ENCODE measurements at regions of chr17 and their contacts with region 1.

Region 1: DNA sequence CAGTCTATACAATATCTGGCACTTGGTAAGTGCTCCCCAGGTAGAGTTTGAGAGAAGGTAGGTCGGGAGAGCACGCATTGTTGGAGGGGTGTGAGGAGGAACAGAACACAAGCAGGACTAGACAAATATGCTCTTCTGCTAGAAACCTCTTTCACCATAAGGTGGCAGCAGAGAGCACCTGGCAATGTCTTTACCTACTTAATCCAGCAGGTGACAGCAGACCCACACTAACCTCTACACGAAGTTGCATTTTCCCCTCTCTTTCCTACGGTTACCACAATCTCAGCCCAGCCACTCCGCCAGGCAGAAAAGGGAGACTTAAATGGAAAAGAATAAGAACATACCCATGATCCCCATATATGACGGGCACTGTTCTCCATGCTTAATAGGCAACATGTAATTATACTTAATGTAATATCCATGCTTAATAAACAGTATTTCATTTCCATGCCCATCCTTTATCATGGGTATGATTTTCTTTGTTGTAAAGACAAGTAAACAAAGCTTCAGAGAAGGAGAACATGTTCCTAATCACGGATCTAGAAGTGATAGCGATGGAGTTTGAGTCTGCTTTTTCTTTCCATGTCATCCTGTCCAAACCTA is 55.1 kb upstream of the CCL2 start:
- DNase-seq: peak in 7 of 10 donors; percentile 36 to 71 (median 56)
- H3K4me3 ChIP-seq: no peak overlapping the region
- H3K27ac ChIP-seq: no peak overlapping the region
- H3K27me3 ChIP-seq: peaks cover 0 to 20% (median 0%) of the 10 kb centered on the region in 45 donors
- CTCF ChIP-seq: peak; percentile 85 to 100 (median 99)

Region 2: GRCh38 chr17:34306466-34306865 is 106.4 kb after region 1 on chr17:
- intact Hi-C with region 1: loop called in 1 of 2 experiments (anchors 5 kb)
- DNase-seq: no peak
- H3K4me3 ChIP-seq: no peak overlapping the region
- H3K27ac ChIP-seq: no peak overlapping the region
- H3K27me3 ChIP-seq: peaks cover 0 to 18% (median 0%) of the 10 kb centered on the region in 45 donors
- CTCF ChIP-seq: peak in 45 of 56 donors; percentile 12 to 66 (median 33)

Region 3: DNA sequence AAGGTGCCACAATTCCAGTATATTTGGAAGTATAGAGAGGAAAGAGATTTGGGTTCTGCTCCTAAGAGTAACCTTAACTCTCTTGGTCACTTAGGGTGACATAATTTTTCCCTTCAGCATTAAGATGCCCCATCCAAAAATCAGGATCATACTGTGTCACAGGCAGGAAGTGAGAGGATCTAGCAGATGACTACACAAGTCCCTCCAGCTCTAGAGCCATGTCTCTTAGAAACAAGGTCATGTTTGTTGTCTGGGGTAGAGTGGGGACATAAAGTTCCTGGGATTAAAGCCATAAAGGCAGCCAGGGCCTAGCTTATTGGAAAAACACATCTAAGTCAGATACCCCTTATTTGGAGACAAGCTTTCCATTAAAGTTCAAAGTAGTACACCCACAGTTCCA is 121.9 kb after region 1 on chr17:
- intact Hi-C with region 1: no loop called
- DNase-seq: no peak
- H3K4me3 ChIP-seq: no peak overlapping the region
- H3K27ac ChIP-seq: no peak overlapping the region
- H3K27me3 ChIP-seq: peaks cover 0 to 4% (median 0%) of the 10 kb centered on the region in 45 donors
- CTCF ChIP-seq: no peak

Region 4: DNA sequence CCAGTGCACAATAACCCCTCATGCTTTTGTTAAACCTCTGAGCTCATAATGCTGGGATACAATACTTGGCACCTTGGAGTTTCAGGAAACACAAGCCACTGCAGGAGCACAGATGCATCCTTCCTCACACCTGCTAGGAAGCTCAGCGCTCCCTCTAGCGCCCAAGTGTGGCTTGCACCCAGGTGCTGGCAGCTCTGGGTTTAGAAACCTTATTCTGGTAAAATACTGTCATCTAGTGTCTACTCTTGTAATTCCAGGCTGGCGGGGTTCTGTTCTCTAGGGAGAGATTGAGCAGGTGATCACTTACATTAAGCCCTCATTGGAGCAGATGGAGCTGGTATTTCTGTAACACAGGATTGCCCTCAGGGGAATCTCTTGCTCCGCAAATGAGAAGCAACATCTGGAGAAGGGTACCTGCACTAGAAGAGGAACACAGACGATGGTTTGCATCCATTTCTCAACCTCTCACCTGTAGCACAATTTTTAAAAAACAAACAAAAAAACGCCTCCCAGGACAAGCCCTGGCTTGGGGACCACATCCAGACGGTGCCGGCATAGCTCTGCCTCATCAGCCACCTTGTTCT is 161.5 kb after region 1 on chr17:
- intact Hi-C with region 1: loop called (anchors 2 kb)
- DNase-seq: peak; percentile 52 to 88 (median 78)
- H3K4me3 ChIP-seq: no peak overlapping the region
- H3K27ac ChIP-seq: no peak overlapping the region
- H3K27me3 ChIP-seq: peaks cover 0 to 19% (median 0%) of the 10 kb centered on the region in 45 donors
- CTCF ChIP-seq: peak; percentile 61 to 99 (median 92)

Measured in dorsolateral prefrontal cortex (tissue), 120 donors.